AG04449 (cell line): ENCODE measurements at regions of chrX and their contacts with region 1.

Region 1: DNA sequence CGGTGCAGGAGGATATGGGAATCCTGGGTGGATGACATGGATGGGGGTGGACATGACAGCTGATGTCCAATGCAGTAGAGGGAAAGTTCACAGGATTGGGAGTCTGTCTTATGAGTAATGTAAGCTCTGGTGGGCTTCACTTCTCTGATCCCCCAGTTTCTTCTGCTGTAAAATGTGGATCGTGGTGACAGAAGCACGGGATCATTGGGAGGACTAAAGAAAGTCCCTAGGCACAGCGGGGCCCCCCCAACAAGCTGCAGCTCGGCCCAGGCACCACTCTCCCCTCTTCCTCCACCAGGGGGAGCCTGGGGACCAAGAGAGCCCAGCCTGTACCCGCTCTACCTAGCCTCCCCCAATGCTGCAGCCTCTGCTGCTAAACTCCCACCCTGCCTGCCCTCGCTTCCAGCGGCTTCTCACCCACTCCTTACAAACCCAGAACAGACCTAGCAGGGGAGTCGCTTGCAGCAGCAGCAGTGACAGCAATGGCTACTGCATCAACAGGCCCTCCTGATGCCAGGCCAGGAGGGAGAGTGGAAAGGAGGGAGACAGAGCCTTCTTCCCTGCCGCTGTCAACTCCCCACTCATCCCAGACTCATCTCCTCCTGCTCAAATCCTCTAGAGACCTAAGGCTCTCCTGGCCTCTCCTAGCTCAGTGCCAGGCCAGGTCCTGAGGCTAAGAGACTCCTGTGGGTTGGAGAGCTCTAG is 36.1 kb upstream of the IQSEC2 start:
- DNase-seq: no peak
- H3K4me3 ChIP-seq: no peak overlapping the region
- CTCF ChIP-seq: peak; percentile 81

Region 2: DNA sequence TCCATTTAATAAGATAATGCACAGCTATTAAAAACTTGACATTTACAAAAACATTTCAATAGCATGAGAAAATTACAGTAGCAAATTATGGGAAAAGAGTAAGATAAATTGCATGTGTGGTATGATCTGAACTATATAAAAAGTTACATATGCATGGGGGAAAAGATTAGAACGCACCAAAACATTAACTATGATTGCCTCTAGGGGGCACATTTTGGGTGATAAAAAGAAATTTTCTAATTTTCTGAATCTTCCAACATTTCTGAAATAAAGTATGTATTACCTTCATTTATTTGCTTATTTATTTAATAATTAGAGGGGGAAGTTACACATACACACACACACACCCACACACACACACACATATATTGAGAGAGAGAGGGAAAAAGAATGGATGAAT is 72.9 kb before region 1 on chrX:
- CTCF ChIA-PET with region 1: interaction called, 13 read pairs
- POLR2A ChIA-PET with region 1: no interaction called
- DNase-seq: no peak
- H3K4me3 ChIP-seq: no peak overlapping the region
- CTCF ChIP-seq: no peak

Region 3: DNA sequence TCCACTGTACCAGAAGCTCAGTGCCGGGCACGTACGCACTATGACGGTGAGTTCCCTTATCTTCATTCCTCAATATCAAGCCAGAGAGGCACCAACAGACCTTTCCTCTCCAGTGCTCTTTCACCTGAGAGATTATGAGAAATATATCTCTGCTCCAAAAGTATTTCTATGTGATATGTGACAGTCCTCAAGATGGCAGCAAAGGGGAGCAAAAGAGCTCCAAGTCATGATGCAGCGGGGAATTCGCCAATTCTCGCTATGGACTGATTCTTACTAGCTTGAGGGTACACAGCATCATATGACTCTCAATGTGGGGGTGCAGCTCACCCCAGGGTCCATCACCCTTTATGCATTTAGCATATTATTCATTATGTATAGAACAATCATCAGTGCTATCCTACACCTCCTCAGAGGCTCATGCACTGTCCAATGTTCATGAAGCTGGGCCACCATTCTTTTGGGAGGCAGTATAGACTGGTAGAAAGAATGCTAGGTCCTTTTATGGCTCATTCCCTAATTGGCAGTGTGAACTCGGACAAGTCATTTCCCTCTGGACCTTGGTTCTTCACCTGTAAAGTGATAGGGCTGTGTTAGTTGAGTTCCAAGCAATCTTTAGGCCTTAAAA is 23.4 kb before region 1 on chrX:
- CTCF ChIA-PET with region 1: interaction called, 77 read pairs
- POLR2A ChIA-PET with region 1: no interaction called
- DNase-seq: no peak
- H3K4me3 ChIP-seq: no peak overlapping the region
- CTCF ChIP-seq: no peak

Region 4: DNA sequence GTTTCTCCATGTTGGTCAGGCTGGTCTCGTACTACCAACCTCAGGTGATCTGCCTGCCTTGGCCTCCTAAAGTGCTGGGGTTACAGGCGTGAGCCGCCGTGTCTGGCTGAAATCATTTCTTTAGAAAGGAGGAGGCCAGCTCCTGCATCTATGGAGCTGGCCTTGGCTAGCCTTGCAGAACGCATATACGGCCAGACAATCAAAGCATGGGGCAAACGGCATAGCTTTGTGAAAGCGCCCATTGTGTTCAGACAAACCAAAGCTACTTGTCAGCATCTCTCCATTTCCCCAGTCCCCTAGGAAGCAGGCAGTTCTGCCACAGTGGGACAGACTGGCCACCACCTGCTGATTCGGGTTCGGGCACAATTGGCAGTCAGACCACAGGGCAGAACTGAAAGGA is 12.8 kb after region 1 on chrX:
- CTCF ChIA-PET with region 1: interaction called, 86 read pairs
- POLR2A ChIA-PET with region 1: no interaction called
- DNase-seq: no peak
- H3K4me3 ChIP-seq: no peak overlapping the region
- CTCF ChIP-seq: no peak

Region 5: GRCh38 chrX:53445977-53446376 is 128.5 kb after region 1 on chrX:
- CTCF ChIA-PET with region 1: interaction called, 71 read pairs
- POLR2A ChIA-PET with region 1: no interaction called
- DNase-seq: no peak
- H3K4me3 ChIP-seq: no peak overlapping the region
- CTCF ChIP-seq: peak; percentile 52